ENCODE measurements at regions of chr12 and their contacts with region 1.

Region 1: GRCh38 chr12:117367011-117367638 is 5.7 kb upstream of the NOS1 start:
- DNase-seq: peak; percentile 55
- H3K4me3 ChIP-seq: no peak overlapping the region
- H3K27ac ChIP-seq: no peak overlapping the region
- H3K4me1 ChIP-seq: no peaks in the 10 kb centered on the region
- H3K27me3 ChIP-seq: peaks cover 3% of the 10 kb centered on the region
- CTCF ChIP-seq: peak; percentile 91 to 93

Region 2: DNA sequence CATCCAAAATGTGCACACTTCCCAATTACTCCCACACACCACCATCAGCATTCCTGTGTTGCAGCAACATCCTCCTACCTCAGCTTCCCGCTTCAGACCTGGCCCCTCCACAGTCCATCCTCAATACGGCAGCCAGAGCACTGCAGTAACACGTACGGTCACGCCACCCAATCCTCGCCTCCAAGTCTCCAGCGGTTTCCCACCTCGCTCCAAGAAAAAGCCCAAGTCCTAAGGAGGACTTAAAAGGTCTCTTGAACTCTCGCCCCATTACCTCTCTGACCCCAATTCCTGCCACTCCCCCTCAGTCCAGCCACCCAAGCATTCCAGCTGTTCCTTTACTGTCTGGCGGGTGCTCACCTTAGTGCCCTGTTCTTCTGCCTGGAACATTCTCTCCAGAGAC is 188.8 kb before region 1 on chr12:
- CTCF ChIA-PET with region 1: no interaction called
- dilution Hi-C with region 1: no loop called
- in situ Hi-C with region 1: no loop called
- intact Hi-C with region 1: no loop called
- DNase-seq: no peak
- H3K4me3 ChIP-seq: no peak overlapping the region
- H3K27ac ChIP-seq: no peak overlapping the region
- H3K4me1 ChIP-seq: no peaks in the 10 kb centered on the region
- H3K27me3 ChIP-seq: no peaks in the 10 kb centered on the region
- CTCF ChIP-seq: no peak

Region 3: GRCh38 chr12:117212563-117213190 is 154.4 kb before region 1 on chr12:
- CTCF ChIA-PET with region 1: no interaction called
- dilution Hi-C with region 1: no loop called
- in situ Hi-C with region 1: no loop called
- intact Hi-C with region 1: loop called (anchors 2 kb)
- DNase-seq: peak; percentile 55
- H3K4me3 ChIP-seq: no peak overlapping the region
- H3K27ac ChIP-seq: no peak overlapping the region
- H3K4me1 ChIP-seq: no peaks in the 10 kb centered on the region
- H3K27me3 ChIP-seq: peaks cover 2% of the 10 kb centered on the region
- CTCF ChIP-seq: peak; percentile 85 to 88

Region 4: GRCh38 chr12:117587631-117588287 is 220.6 kb after region 1 on chr12:
- CTCF ChIA-PET with region 1: no interaction called
- dilution Hi-C with region 1: no loop called
- in situ Hi-C with region 1: no loop called
- intact Hi-C with region 1: loop called (anchors 1 kb)
- DNase-seq: peak; percentile 4
- H3K4me3 ChIP-seq: no peak overlapping the region
- H3K27ac ChIP-seq: no peak overlapping the region
- H3K4me1 ChIP-seq: no peaks in the 10 kb centered on the region
- H3K27me3 ChIP-seq: no peaks in the 10 kb centered on the region
- CTCF ChIP-seq: peak; percentile 64 to 79

Region 5: DNA sequence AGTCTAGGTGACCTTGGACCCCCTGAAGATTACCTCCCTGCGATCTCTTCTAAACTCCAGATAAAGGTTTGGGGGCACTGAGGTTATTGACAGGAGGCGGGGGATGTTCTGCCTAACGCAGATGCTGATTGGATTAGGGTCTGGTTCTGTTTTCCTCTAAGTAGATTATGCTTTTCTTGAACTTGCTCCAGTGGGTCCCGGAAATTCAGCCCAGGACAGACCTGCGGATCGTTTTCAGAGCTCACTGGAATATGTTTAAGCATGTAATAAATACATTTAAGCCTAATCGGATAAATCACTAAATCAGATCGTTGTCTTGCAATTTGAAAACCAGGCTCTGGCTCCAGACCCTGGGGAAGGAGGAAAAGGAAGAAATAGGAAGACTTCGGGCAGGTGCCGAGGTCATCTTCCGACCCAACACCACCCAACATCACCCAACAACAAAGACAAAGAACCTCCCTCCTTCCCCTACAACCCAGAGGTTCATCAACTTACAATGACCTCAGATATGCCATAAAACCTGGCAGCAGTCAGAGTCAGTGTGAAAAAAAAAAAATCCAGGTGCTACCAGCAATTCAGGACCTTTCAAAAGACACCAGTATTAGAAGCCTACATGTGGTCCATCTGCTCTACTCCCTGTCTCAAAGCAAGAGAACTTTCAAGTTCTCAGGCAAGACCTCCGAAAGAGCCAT is 453.2 kb after region 1 on chr12:
- CTCF ChIA-PET with region 1: no interaction called
- dilution Hi-C with region 1: no loop called
- in situ Hi-C with region 1: loop called (anchors 10 to 25 kb)
- intact Hi-C with region 1: no loop called
- DNase-seq: no peak
- H3K4me3 ChIP-seq: no peak overlapping the region
- H3K27ac ChIP-seq: no peak overlapping the region
- H3K4me1 ChIP-seq: no peaks in the 10 kb centered on the region
- H3K27me3 ChIP-seq: no peaks in the 10 kb centered on the region
- CTCF ChIP-seq: no peak

Region 6: DNA sequence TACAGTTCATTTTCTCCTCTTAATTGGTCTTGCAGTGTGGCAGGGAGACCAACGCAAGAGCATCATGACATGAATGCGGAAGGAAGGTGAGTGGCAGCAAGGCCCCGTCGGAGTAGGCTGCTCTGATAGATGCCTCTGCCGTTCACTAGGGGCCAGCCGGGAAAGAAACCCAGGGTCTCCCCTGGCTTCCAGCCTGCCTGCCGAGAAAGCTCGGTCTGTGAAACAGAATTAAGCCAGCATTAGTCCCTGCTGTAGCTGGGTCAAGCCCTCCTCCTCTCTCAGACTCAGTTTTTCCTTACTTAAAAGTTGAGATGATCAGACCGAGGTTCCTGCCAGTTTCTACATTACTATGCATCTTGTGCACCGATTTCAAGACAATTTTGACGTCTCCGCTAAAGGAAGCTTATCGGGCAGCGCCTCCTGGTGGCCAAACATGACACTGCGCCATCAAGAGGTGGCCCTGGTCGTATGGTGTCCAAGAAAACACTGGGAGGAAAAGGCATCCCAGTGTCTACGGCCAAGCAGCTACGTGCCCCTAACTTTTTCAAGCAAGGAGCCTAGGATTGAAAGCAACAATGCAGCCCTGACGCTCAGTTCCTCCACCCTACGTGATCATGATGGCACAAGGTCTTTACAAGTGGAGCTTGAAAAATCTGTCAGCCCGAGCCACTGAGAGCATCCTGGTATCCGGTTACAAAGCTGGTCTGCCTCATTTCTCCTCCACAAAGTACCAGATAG is 470.0 kb after region 1 on chr12:
- CTCF ChIA-PET with region 1: interaction called, 4 read pairs
- dilution Hi-C with region 1: no loop called
- in situ Hi-C with region 1: loop called in 1 of 2 experiments (anchors 25 kb)
- intact Hi-C with region 1: loop called (anchors 1 kb)
- DNase-seq: peak; percentile 39
- H3K4me3 ChIP-seq: no peak overlapping the region
- H3K27ac ChIP-seq: no peak overlapping the region
- H3K4me1 ChIP-seq: no peaks in the 10 kb centered on the region
- H3K27me3 ChIP-seq: no peaks in the 10 kb centered on the region
- CTCF ChIP-seq: peak; percentile 94

Region 7: GRCh38 chr12:117850048-117850447 is 482.9 kb after region 1 on chr12:
- CTCF ChIA-PET with region 1: no interaction called
- dilution Hi-C with region 1: no loop called
- in situ Hi-C with region 1: loop called in 1 of 2 experiments (anchors 25 kb)
- intact Hi-C with region 1: loop called (anchors 1 kb)
- DNase-seq: peak; percentile 16
- H3K4me3 ChIP-seq: no peak overlapping the region
- H3K27ac ChIP-seq: no peak overlapping the region
- H3K4me1 ChIP-seq: no peaks in the 10 kb centered on the region
- H3K27me3 ChIP-seq: no peaks in the 10 kb centered on the region
- CTCF ChIP-seq: peak; percentile 83 to 96